ENCODE measurements at regions of chr18 and their contacts with region 1.

Region 1: GRCh38 chr18:62312851-62313250 is 12.3 kb upstream of the TNFRSF11A start:
- DNase-seq: no peak
- H3K4me3 ChIP-seq: no peak overlapping the region
- H3K27ac ChIP-seq: no peak overlapping the region
- H3K4me1 ChIP-seq: no peaks in the 10 kb centered on the region
- H3K27me3 ChIP-seq: no peaks in the 10 kb centered on the region
- CTCF ChIP-seq: no peak
- POLR2A ChIP-seq: no peak

Region 2: GRCh38 chr18:62300359-62300963 is 12.4 kb before region 1 on chr18:
- CTCF ChIA-PET with region 1: interaction called, 16 read pairs
- POLR2A ChIA-PET with region 1: no interaction called
- dilution Hi-C with region 1: no loop called
- intact Hi-C with region 1: no loop called
- DNase-seq: no peak
- H3K4me3 ChIP-seq: no peak overlapping the region
- H3K27ac ChIP-seq: no peak overlapping the region
- H3K4me1 ChIP-seq: no peaks in the 10 kb centered on the region
- H3K27me3 ChIP-seq: no peaks in the 10 kb centered on the region
- CTCF ChIP-seq: no peak
- POLR2A ChIP-seq: no peak